Activated T-helper 2 cell treated with anti-CD3 and anti-CD28 coated beads, Interferon-gamma antibody, Interleukin-2, Interleukin-4, amounts not matched to agents 10 μg/mL and 5 μg/mL and 100 μg/mL, durations not matched to agents 14 hours and 24 hours and 36 hours (primary cell): ENCODE measurements at regions of chr1 and their contacts with region 1.

Region 1: GRCh38 chr1:67332653-67333529 is 25.2 kb downstream of the IL12RB2 start:
- DNase-seq: no peak
- H3K4me3 Mint-ChIP-seq: peak overlapping the region; percentile 45
- H3K27ac Mint-ChIP-seq: peak overlapping the region; percentile 91
- H3K4me1 Mint-ChIP-seq: peaks cover 68% of the 10 kb centered on the region
- H3K27me3 Mint-ChIP-seq: no peaks in the 10 kb centered on the region

Region 2: DNA sequence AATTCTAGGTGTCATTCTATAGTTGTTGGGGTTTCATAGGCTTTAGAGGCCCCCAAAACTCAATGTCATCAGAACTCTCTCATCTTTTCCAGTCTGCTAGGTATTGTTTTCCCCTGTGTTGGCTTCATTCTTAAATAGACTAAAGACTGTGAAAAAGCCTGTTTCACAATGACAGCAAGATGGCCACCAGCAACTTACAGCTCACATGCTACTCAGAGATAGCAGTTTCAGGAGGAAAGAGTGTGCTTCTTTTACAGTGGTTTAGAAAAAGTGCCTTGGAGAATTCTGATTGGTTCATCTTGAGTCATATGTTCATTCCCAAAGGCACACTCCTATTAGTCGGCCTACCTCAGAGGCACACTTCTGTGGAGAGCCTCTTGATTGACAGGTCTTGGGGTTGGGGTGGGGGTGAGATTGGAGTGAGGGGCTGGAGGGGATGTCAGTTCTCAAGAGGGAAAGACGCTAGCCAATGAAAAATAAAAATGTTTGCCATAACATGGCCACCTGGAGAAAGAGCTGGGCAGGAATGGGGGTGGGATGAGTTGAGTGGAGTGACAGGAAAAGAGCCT is 158.1 kb before region 1 on chr1:
- intact Hi-C with region 1: loop called (anchors 1 kb)
- DNase-seq: no peak
- H3K4me3 Mint-ChIP-seq: no peak overlapping the region
- H3K27ac Mint-ChIP-seq: peak overlapping the region; percentile 63
- H3K4me1 Mint-ChIP-seq: peaks cover 49% of the 10 kb centered on the region
- H3K27me3 Mint-ChIP-seq: peaks cover 4% of the 10 kb centered on the region

Region 3: GRCh38 chr1:67194209-67194863 is 138.6 kb before region 1 on chr1:
- intact Hi-C with region 1: loop called (anchors 1 kb)
- DNase-seq: no peak
- H3K4me3 Mint-ChIP-seq: no peak overlapping the region
- H3K27ac Mint-ChIP-seq: peak overlapping the region; percentile 60
- H3K4me1 Mint-ChIP-seq: peaks cover 10% of the 10 kb centered on the region
- H3K27me3 Mint-ChIP-seq: no peaks in the 10 kb centered on the region

Region 4: GRCh38 chr1:67230539-67230938 is 102.4 kb before region 1 on chr1:
- intact Hi-C with region 1: loop called (anchors 2 kb)
- DNase-seq: no peak
- H3K4me3 Mint-ChIP-seq: no peak overlapping the region
- H3K27ac Mint-ChIP-seq: no peak overlapping the region
- H3K4me1 Mint-ChIP-seq: peaks cover 6% of the 10 kb centered on the region
- H3K27me3 Mint-ChIP-seq: no peaks in the 10 kb centered on the region

Region 5: DNA sequence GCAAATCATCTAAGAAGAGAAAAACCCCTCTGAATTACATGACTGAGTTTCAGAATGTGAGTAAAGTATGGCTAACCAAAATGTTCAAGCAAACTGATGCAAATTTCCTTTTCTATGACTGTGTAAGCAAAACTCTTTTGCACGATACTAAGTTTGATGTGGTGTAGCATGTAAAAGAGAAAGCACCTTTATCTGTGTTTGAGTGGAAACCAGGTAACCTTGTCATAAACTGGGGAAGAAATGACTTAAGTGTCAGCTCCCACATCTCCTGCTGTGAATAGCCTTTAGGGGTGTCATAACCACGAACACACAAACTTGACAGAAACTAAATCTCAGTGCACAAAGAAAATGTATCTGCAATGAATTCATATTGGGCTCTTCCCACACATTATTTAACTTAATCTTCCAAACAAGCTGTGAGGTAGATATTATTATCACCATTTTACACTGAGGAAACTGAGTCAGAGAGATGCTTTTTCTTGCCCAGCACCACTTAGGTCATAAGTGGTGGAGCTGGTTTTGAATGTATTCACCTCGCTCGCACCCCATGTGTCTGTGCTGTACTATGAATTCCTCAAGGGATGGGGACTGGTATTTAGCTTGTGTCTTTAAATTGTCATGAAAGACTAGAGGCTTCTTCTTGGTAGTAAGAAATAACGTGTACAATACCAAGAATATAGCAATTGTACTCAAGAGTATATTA is 58.1 kb before region 1 on chr1:
- intact Hi-C with region 1: loop called (anchors 1 kb)
- DNase-seq: no peak
- H3K4me3 Mint-ChIP-seq: no peak overlapping the region
- H3K27ac Mint-ChIP-seq: peak overlapping the region; percentile 59
- H3K4me1 Mint-ChIP-seq: peaks cover 37% of the 10 kb centered on the region
- H3K27me3 Mint-ChIP-seq: no peaks in the 10 kb centered on the region

Region 6: DNA sequence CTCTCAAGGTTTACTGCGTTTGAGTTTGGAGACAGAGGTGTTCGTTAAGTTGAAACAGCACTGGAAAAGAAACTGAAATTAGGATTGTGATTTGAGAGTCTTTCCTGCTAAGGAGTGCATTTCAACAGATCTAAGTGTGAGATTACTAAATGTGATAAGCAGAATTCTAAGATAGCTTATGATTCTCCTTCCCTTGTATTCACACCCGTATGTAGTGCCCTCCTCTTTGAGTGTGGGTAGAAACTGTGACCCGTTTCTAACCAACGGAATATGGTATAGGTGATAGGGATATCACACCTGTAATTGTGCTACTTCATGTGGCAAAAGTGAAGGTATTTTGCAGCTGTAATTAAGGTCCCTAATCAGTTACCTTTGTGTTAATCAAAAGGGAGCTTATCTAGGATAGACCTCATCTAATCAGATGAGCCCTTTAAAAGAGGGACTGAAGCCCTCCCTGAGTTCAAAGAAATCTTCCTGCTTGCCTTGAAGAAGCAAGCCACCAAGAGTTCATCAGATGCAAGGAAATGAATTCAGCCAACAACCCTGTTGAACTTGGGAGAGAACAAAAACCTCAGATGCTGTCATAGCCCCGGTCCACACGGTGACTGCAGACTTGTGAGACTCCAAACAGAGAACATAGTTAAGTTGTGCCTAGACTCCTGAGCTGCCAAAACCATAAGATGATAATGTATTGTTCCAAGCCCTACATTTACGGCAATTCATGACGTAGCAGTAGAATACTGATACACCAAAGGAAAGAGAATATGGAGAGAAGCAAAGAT is 37.9 kb before region 1 on chr1:
- intact Hi-C with region 1: loop called (anchors 2 kb)
- DNase-seq: peak; percentile 34
- H3K4me3 Mint-ChIP-seq: peak overlapping the region; percentile 68
- H3K27ac Mint-ChIP-seq: peak overlapping the region; percentile 92
- H3K4me1 Mint-ChIP-seq: peaks cover 46% of the 10 kb centered on the region
- H3K27me3 Mint-ChIP-seq: no peaks in the 10 kb centered on the region

Region 7: DNA sequence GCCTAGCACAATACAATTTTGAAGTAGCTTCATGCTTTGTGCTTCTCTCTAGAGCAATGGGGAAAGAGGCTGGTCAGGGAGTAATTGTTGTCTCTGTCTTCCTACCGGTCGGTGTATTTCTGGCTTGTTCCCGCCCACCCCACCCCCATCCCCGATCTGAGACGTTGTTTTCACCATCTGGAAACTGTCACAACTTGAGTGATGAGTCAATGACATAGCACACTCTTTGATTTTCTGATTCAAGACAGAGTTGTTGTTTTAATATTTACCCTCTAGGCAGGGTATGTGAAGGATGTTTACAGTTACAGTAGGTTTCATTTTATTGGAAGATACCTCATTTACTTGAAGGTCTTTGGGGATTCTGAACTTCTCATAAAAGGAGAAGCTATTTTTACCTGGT is 18.2 kb before region 1 on chr1:
- intact Hi-C with region 1: loop called (anchors 2 kb)
- DNase-seq: no peak
- H3K4me3 Mint-ChIP-seq: peak overlapping the region; percentile 32
- H3K27ac Mint-ChIP-seq: peak overlapping the region; percentile 77
- H3K4me1 Mint-ChIP-seq: peaks cover 56% of the 10 kb centered on the region
- H3K27me3 Mint-ChIP-seq: no peaks in the 10 kb centered on the region

Region 8: GRCh38 chr1:67515324-67516080 is 182.6 kb after region 1 on chr1:
- intact Hi-C with region 1: no loop called
- DNase-seq: no peak
- H3K4me3 Mint-ChIP-seq: no peak overlapping the region
- H3K27ac Mint-ChIP-seq: no peak overlapping the region
- H3K4me1 Mint-ChIP-seq: no peaks in the 10 kb centered on the region
- H3K27me3 Mint-ChIP-seq: peaks cover 4% of the 10 kb centered on the region